ENCODE measurements at regions of chr1 and their contacts with region 1.

Region 1: DNA sequence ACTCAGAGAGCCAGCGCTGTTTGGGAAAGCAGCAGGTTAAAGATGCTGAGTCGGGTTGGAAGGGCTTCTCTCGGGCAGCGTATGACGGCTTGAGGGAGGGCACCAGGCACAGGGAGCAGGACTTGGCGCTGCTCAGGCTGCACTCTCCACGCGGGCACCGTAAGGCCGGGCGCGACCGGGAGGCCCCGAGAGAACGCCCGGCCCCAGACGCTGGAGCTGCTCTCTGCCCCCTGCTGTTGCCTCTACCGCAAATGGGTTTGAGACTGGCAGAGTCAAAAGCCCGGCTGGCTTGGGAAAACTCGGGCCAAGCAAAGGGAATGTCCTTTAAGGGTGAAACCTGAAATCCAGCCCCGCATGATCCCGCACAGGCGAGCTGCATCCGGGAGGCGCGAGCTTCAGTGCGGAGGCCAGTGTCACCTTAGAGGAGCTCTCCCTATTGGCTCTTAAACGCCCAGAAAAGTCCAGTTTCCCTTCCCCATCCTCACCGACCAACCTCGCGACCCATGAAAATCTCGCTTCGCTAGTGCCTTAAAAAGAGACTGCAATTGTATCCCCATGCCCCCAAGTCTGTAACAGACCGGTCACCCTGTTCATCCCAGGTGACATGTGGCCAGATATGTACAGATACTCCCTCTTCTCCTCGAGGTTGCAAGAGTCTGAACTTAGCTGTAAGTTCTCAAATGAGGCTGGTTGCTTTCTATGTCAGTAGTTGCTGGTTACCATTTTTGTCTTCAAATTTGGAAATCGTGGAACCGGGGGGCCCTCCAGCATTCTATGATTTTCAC is 1.1 kb downstream of the PRRX1 start:
- DNase-seq: peak; percentile 72 to 88
- ATAC-seq: peak; percentile 69
- H3K4me3 ChIP-seq: peak overlapping the region; percentile 90 to 91
- H3K27ac ChIP-seq: peak overlapping the region; percentile 71 to 83
- H3K4me1 ChIP-seq: no peaks in the 10 kb centered on the region
- H3K27me3 ChIP-seq: no peaks in the 10 kb centered on the region

Region 2: DNA sequence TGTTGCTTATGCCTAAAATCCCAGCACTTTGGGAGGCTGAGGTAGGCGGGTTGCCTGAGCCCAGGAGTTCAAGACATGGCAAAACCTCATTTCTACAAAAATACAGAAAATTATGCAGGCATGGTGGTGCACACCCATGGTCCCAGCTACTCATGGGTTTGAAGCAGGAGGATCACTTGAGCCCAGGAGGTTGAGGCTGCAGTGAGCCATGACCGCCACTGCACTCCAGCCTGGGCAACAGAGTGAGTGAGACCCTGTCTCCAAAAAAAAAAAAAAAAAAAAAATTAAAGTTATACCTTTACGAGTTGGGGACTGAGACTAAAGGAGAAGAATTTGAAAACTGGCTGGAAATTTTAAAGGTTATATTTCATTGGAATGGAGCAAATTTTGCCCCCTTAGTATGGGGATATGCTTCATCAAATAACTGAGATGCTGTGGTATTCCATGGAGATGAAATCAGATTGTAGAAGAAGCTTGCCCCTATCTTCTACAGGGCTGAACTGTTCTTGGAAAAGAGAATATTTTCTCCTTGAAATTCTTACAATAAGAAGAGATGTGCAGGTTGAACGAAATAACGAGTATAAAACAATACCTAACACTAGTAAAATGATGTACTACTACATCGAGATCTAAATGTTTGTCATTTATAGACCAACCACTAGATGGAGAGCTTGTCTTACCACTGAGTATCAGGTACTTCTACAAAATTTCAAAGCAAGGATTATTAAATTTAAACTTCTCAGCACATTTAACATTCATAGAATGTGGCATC is 736.4 kb before region 1 on chr1:
- intact Hi-C with region 1: loop called (anchors 5 to 10 kb)
- DNase-seq: no peak
- ATAC-seq: peak; percentile 78
- H3K4me3 ChIP-seq: no peak overlapping the region
- H3K27ac ChIP-seq: no peak overlapping the region
- H3K4me1 ChIP-seq: no peaks in the 10 kb centered on the region
- H3K27me3 ChIP-seq: no peaks in the 10 kb centered on the region

Region 3: DNA sequence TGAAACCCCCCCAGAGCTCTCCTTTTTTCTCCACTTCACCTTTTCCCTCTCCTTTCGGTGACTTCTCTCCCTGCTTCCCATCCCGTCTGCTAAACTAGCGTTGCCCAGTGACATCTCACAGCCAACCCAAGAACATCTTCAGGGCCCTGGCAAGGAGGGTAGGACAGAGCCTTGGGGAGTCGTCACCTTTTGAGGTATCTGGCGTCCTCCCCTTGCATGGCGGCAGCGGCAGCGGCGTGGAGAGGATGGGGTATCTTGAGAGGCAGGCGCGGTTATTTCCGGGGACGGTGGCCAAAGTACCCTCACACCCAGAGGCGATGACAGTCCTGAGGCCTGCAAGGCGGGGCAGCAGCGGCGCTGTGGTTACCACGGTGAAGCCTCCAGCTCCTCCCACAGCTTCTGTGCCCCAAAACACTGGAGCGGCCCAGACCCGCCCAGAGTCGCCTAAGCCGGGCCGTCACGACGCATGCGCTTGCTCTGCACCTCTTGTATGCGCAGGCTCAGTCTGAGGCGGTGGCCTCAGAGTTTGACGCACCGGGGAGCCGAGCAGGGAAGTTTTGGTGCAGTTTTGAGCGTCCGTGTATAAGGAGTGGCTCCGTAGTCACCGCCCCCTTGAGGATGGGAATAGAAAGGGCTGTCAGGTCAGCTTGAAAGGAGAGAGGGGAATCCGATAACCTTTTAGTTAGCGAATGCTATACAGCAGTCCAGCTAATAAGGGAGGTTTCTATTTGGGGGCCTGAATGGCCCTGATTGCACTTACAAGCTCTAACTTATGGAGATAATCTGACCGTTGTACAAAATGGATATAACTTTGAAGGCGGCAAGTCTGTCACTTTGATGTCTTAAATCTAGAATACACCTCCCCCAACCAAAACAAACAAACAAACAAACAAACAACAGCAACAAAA is 590.5 kb before region 1 on chr1 and contains the start of gene KIFAP3:
- intact Hi-C with region 1: loop called in 1 of 2 experiments (anchors 10 kb)
- DNase-seq: peak; percentile 99
- ATAC-seq: peak; percentile 100
- H3K4me3 ChIP-seq: peak within 1 kb of the TSS; percentile 88 to 99
- H3K27ac ChIP-seq: peak within 1 kb of the TSS; percentile 72 to 76
- H3K4me1 ChIP-seq: peaks cover 0 to 3% of the 10 kb centered on the region in 2 donors
- H3K27me3 ChIP-seq: no peaks in the 10 kb centered on the region
- total RNA-seq, gene KIFAP3: 36.0 to 38.7 TPM

Region 4: GRCh38 chr1:170471398-170472053 is 193.5 kb before region 1 on chr1:
- intact Hi-C with region 1: loop called in 1 of 2 experiments (anchors 10 kb)
- DNase-seq: no peak
- ATAC-seq: no peak
- H3K4me3 ChIP-seq: no peak overlapping the region
- H3K27ac ChIP-seq: no peak overlapping the region
- H3K4me1 ChIP-seq: no peaks in the 10 kb centered on the region
- H3K27me3 ChIP-seq: no peaks in the 10 kb centered on the region

Region 5: GRCh38 chr1:170562646-170563338 is 102.2 kb before region 1 on chr1:
- intact Hi-C with region 1: loop called in 1 of 2 experiments (anchors 10 kb)
- DNase-seq: peak in 1 of 2 donors; percentile 75
- ATAC-seq: peak; percentile 88
- H3K4me3 ChIP-seq: no peak overlapping the region
- H3K27ac ChIP-seq: peak overlapping the region in 1 of 2 donors; percentile 30
- H3K4me1 ChIP-seq: peaks cover 2 to 16% of the 10 kb centered on the region in 2 donors
- H3K27me3 ChIP-seq: no peaks in the 10 kb centered on the region

Region 6: DNA sequence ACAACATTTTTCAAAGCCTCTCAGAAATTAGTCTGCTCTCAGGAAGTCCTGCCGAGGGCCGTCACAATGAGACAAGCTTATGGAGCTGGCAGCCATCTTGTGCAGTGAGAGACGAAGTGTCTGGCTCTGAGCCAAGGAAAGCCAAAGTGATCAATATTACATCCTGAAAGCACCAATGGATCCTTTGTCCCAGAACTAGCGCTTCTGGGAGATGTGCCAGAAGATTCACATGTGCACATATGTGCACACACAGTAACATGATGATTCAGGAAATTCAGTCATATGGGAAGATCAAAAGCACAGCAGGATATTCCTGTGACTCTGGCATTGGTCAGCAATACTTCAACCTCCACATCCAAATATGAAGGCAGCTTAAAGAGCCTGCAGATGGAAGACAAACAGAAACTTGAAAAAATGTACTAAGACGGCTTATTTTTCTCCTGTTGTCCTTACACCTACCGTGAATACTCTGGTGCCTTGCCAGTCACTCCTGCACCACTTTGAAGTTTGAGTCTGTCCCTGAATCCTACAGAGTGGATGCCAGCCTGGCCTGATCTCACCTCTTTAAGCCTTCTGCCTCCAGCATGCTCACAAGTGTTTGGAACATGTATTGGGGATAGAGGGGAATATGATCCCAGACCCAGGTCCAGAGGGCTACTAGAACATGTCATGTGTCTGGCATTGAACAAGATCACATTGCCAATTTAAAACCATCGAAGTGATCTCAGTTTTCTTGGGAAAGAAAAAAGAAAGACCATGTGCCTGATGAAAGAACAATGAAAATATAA is 45.6 kb before region 1 on chr1:
- intact Hi-C with region 1: no loop called
- DNase-seq: no peak
- ATAC-seq: no peak
- H3K4me3 ChIP-seq: no peak overlapping the region
- H3K27ac ChIP-seq: no peak overlapping the region
- H3K4me1 ChIP-seq: no peaks in the 10 kb centered on the region
- H3K27me3 ChIP-seq: no peaks in the 10 kb centered on the region

Region 7: GRCh38 chr1:170872663-170873062 is 207.6 kb after region 1 on chr1:
- intact Hi-C with region 1: loop called in 1 of 2 experiments (anchors 10 kb)
- DNase-seq: no peak
- ATAC-seq: no peak
- H3K4me3 ChIP-seq: no peak overlapping the region
- H3K27ac ChIP-seq: no peak overlapping the region
- H3K4me1 ChIP-seq: no peaks in the 10 kb centered on the region
- H3K27me3 ChIP-seq: no peaks in the 10 kb centered on the region